ENCODE measurements at regions of chr1 and their contacts with region 1.

Region 1: GRCh38 chr1:91997607-91998195 is 32.1 kb upstream of the EPHX4 start:
- DNase-seq: peak; percentile 59
- H3K4me3 ChIP-seq: no peak overlapping the region
- H3K27ac ChIP-seq: no peak overlapping the region
- H3K4me1 ChIP-seq: no peaks in the 10 kb centered on the region
- H3K27me3 ChIP-seq: no peaks in the 10 kb centered on the region
- CTCF ChIP-seq: peak; percentile 48 to 51
- POLR2A ChIP-seq: no peak

Region 2: GRCh38 chr1:91929250-91929649 is 68.5 kb before region 1 on chr1:
- CTCF ChIA-PET with region 1: interaction called, 10 read pairs
- POLR2A ChIA-PET with region 1: no interaction called
- dilution Hi-C with region 1: no loop called
- intact Hi-C with region 1: no loop called
- DNase-seq: peak; percentile 53
- H3K4me3 ChIP-seq: no peak overlapping the region
- H3K27ac ChIP-seq: no peak overlapping the region
- H3K4me1 ChIP-seq: peaks cover 4% of the 10 kb centered on the region
- H3K27me3 ChIP-seq: no peaks in the 10 kb centered on the region
- CTCF ChIP-seq: no peak
- POLR2A ChIP-seq: no peak

Region 3: GRCh38 chr1:92013923-92014322 is 16.2 kb after region 1 on chr1:
- CTCF ChIA-PET with region 1: interaction called, 19 read pairs
- POLR2A ChIA-PET with region 1: no interaction called
- dilution Hi-C with region 1: no loop called
- intact Hi-C with region 1: no loop called
- DNase-seq: no peak
- H3K4me3 ChIP-seq: no peak overlapping the region
- H3K27ac ChIP-seq: no peak overlapping the region
- H3K4me1 ChIP-seq: no peaks in the 10 kb centered on the region
- H3K27me3 ChIP-seq: no peaks in the 10 kb centered on the region
- CTCF ChIP-seq: no peak
- POLR2A ChIP-seq: no peak

Region 4: DNA sequence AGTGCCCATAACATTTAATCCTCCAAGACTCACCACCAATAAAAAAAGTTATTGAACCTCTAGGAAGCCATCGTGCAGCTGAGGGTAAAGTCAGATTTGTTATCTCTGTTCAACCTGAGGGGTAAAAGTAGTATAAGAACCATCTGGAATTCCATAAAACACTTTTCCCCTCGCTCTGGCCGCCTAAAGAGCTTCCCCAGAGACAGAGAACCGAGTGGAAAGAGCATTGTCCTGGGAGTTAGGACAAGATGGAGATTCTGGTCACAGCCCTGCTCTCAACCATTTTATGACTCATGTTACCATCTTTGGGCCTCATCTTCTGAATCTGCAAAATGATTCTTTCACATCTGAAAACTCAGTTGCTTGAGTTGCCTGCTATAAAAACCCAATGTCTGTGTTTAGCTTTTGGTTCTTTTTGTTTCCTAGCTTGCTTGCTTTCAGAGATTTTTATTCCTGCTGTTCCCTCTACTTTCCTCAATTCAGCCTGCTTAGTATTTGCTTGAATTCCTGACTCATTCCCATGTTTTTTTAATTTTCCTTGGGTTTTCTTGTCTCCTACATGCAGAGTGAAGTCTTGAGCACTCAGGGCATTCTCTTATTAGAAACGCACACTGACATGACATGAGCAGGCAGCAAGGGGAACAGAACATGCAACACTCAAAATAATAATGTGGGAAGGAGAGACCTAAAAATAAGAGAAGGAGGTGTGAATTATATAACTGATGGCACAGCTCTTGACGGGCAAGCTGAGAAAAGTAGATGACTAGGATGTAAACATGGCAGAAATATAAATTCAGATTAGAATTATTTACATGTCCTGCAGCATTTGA is 33.8 kb after region 1 on chr1:
- CTCF ChIA-PET with region 1: no interaction called
- POLR2A ChIA-PET with region 1: no interaction called
- dilution Hi-C with region 1: no loop called
- intact Hi-C with region 1: no loop called
- DNase-seq: no peak
- H3K4me3 ChIP-seq: no peak overlapping the region
- H3K27ac ChIP-seq: peak overlapping the region; percentile 71
- H3K4me1 ChIP-seq: peaks cover 21% of the 10 kb centered on the region
- H3K27me3 ChIP-seq: no peaks in the 10 kb centered on the region
- CTCF ChIP-seq: no peak
- POLR2A ChIP-seq: no peak

Region 5: DNA sequence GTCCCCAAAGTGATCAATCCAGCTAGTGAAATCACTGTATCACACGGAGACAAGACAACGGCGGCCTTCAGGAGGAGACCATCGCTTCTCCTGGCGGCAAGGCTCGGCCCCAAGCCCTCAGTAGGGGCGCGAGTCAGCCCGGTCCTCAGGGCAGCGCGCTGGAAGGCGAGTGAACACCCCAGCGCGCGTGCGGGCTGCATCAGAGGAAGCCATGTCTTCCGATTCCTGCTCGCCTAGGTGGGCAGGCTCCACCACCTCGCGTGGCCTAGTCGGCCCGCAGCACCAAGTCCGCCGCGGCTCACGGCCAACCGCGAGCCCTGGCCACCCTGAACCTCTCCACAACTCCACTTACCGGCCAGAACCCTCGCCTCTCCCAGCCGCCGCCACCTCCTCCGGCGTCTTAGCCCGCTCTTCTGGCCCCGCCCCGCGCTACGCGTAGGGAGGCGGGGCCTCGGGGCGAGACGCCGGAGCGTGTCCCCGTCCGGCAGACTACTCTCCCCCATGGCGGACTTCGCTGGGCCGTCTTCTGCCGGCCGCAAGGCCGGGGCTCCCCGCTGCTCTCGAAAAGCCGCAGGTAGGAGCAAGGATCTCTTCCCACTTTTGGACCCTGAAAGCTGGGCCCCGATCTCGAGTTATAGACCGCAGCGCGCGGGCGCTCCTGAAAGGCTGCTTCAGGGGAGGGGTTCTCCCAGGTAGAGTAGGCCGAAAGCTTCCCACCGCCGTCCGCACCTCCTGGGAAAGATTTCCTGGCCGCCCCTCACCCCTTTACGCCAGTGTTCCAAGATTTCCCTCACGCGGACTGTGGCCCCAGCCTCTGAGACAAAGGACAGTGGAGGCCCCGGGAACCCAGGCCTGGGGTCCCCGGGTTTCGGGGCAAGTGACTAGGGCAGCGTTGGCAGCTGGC is 301.1 kb after region 1 on chr1 and contains the starts of genes GLMN and RPAP2:
- CTCF ChIA-PET with region 1: interaction called, 232 read pairs
- POLR2A ChIA-PET with region 1: no interaction called
- dilution Hi-C with region 1: no loop called
- intact Hi-C with region 1: loop called (anchors 2 kb)
- DNase-seq: peak; percentile 90
- H3K4me3 ChIP-seq: peak within 1 kb of the TSS; percentile 68 to 99 (median 97)
- H3K27ac ChIP-seq: peak within 1 kb of the TSS; percentile 89
- H3K4me1 ChIP-seq: peaks cover 10% of the 10 kb centered on the region
- H3K27me3 ChIP-seq: no peaks in the 10 kb centered on the region
- CTCF ChIP-seq: peak; percentile 3 to 23
- POLR2A ChIP-seq: peak; percentile 92
- total RNA-seq, gene GLMN: 13.2 and 13.7 TPM in 2 replicates
- total RNA-seq, gene RPAP2: 23.5 and 24.9 TPM in 2 replicates

Region 6: DNA sequence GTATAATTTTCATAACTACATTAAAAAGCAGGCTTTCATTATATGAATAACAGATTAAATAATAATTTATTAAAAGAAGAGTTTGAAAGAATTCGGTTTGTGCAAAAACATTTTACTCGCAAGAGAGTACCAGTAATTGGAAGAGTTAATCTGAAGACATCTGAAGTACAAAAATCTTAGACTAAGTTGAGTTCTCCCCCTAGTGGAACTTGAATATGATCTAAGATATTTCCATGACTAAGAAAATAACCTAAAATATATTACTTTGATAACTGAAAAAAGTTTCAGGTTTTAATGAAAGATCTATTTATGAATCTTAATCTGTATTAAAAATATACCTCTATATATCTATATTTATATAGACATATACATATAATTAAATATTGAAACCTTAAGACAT is 601.5 kb after region 1 on chr1:
- CTCF ChIA-PET with region 1: interaction called, 11 read pairs
- POLR2A ChIA-PET with region 1: no interaction called
- dilution Hi-C with region 1: no loop called
- intact Hi-C with region 1: loop called (anchors 5 kb)
- DNase-seq: peak; percentile 24
- H3K4me3 ChIP-seq: no peak overlapping the region
- H3K27ac ChIP-seq: no peak overlapping the region
- H3K4me1 ChIP-seq: no peaks in the 10 kb centered on the region
- H3K27me3 ChIP-seq: no peaks in the 10 kb centered on the region
- CTCF ChIP-seq: peak; percentile 9 to 24
- POLR2A ChIP-seq: no peak